ENCODE measurements at regions of chr5 and their contacts with region 1.

Region 1: DNA sequence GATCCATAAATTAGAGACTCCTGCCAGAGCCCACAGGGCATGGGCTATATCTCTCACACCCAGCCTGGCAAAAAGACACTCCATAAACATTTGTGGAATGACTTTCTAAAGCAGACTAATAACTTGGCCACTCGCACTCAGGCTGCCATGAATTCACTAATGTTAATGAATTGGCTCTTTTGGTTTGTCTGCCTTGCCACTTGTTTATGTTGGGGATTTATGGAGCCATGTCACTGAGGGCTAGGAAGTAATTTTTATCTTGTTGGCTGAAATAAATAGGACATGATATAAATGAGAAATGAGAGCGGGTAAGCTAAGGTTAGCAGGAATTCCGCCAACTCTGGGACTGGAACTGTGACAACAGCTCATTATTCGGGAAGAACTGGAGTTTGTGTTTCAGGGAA is 55.2 kb downstream of the DROSHA start:
- DNase-seq: no peak
- ATAC-seq: no peak
- H3K4me3 ChIP-seq: no peak overlapping the region
- H3K4me3 Mint-ChIP-seq: no peak overlapping the region
- H3K27ac ChIP-seq: no peak overlapping the region
- H3K27ac Mint-ChIP-seq: no peak overlapping the region
- H3K4me1 ChIP-seq: no peaks in the 10 kb centered on the region
- H3K4me1 Mint-ChIP-seq: no peaks in the 10 kb centered on the region
- H3K27me3 ChIP-seq: no peaks in the 10 kb centered on the region
- H3K27me3 Mint-ChIP-seq: no peaks in the 10 kb centered on the region
- CTCF ChIP-seq: no peak

Region 2: GRCh38 chr5:30765227-30765626 is 711.5 kb before region 1 on chr5:
- CTCF ChIA-PET with region 1: no interaction called
- POLR2A ChIA-PET with region 1: no interaction called
- intact Hi-C with region 1: no loop called
- DNase-seq: no peak
- ATAC-seq: no peak
- H3K4me3 ChIP-seq: no peak overlapping the region
- H3K4me3 Mint-ChIP-seq: no peak overlapping the region
- H3K27ac ChIP-seq: no peak overlapping the region
- H3K27ac Mint-ChIP-seq: no peak overlapping the region
- H3K4me1 ChIP-seq: no peaks in the 10 kb centered on the region
- H3K4me1 Mint-ChIP-seq: no peaks in the 10 kb centered on the region
- H3K27me3 ChIP-seq: no peaks in the 10 kb centered on the region
- H3K27me3 Mint-ChIP-seq: no peaks in the 10 kb centered on the region
- CTCF ChIP-seq: no peak

Region 3: DNA sequence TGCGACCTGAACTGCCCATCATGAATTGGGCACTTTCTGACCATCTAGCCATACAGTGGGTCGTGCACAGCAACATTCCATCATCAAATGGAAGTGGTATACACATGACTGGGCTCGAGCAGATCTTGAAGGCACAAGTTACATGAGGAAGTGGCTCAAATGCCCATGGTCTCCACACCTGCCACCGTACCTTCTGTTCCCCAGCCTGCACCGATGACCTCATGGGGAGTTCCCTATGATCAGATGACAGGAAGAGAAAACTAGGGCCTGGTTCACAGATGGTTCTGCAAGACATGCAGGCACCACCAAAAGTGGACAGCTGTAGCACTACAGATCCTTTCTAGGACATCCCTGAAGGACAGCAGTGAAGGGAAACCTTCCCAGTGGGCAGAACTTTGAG is 814.2 kb after region 1 on chr5:
- CTCF ChIA-PET with region 1: no interaction called
- POLR2A ChIA-PET with region 1: no interaction called
- intact Hi-C with region 1: loop called in 1 of 2 experiments (anchors 5 kb)
- DNase-seq: peak in 2 of 9 experiments; percentile 22 to 41
- ATAC-seq: no peak
- H3K4me3 ChIP-seq: no peak overlapping the region
- H3K4me3 Mint-ChIP-seq: no peak overlapping the region
- H3K27ac ChIP-seq: no peak overlapping the region
- H3K27ac Mint-ChIP-seq: no peak overlapping the region
- H3K4me1 ChIP-seq: no peaks in the 10 kb centered on the region
- H3K4me1 Mint-ChIP-seq: peaks cover 49% of the 10 kb centered on the region
- H3K27me3 ChIP-seq: no peaks in the 10 kb centered on the region
- H3K27me3 Mint-ChIP-seq: no peaks in the 10 kb centered on the region
- CTCF ChIP-seq: no peak

Measured in CD8-positive, alpha-beta T cell (primary cell).